Mucosa of descending colon (tissue), 3 donors: ENCODE measurements at regions of chr15 and their contacts with region 1.

Region 1: DNA sequence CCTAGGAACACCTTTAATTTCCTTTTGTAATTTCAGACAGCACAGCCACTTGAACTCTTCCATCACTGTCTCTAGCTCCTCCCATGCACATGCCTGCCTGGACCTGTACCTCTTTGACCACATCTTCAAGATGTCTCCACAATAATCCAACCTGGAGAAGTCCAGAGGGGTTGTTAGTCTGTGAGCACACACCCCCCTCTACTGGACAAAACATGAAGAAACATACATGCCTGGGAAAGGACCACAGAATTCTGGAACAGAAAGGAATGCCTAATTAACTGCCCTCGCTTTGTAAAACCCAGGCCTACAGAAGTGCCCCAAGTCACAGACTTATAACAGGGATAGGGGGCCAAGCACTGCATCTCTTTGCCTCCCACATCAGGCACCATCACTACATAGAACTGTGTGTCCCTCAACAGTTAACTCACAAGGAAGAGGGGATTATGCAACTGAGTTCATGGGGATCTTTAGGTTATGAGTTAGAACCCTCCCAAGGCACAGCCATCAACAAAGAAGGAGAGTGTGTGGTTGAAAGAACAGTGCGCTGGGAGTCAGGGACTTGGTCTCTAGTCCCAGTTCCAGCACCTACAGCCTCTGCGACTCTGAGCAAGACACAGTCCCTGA is 61.7 kb downstream of the FMN1 start:
- DNase-seq: peak in 1 of 3 donors; percentile 67
- ATAC-seq: peak; percentile 92
- H3K4me3 ChIP-seq: no peak overlapping the region
- H3K4me1 ChIP-seq: peaks cover 5% of the 10 kb centered on the region
- CTCF ChIP-seq: peak; percentile 23

Region 2: DNA sequence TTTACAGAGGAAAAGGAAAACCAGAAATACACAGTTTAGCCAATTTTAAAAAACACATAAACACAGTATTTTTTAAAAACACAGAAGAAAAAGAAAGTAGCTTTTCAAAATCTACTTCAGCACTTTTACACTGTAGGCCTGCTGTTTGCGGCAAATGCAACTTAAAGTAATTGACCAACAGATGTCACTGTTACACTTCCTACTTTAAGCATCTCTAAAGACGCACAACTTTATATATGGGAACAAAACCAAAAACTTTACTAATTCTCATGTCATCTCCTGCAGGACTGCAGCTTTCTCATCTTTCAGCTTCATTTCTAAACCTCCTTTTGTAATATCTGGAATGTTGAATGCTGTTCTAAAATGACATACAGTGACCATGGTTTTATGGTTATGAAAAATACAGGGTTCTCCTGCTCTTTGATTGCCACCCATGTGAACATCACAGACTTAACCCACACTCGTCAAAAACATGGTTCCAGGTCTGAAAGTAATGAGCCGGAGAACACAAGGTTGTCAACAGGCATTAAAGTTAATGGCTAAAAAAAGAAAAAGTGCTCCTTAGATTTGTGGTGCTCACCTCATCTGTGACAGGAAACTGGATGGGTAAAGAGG is 46.2 kb before region 1 on chr15:
- intact Hi-C with region 1: loop called in 1 of 2 experiments (anchors 1 kb)
- DNase-seq: no peak
- ATAC-seq: peak; percentile 34
- H3K4me3 ChIP-seq: no peak overlapping the region
- H3K4me1 ChIP-seq: peaks cover 3% of the 10 kb centered on the region
- CTCF ChIP-seq: peak; percentile 16